ENCODE measurements at regions of chr14 and their contacts with region 1.

Region 1: GRCh38 chr14:74793506-74794168 is 30.5 kb downstream of the YLPM1 start:
- DNase-seq: no peak
- H3K4me3 ChIP-seq: no peak overlapping the region
- H3K27ac ChIP-seq: no peak overlapping the region
- H3K4me1 ChIP-seq: peaks cover 0 to 14% (median 0%) of the 10 kb centered on the region in 4 experiments; a peak in 1 of 7 replicates
- H3K27me3 ChIP-seq: no peaks in the 10 kb centered on the region
- CTCF ChIP-seq: peak in 2 of 3 experiments; percentile 40 to 51; a peak in 3 of 4 replicates
- EP300 ChIP-seq: no peak
- POLR2A ChIP-seq: no peak
- RAD21 ChIP-seq: no peak; a peak in 1 of 4 replicates

Region 2: DNA sequence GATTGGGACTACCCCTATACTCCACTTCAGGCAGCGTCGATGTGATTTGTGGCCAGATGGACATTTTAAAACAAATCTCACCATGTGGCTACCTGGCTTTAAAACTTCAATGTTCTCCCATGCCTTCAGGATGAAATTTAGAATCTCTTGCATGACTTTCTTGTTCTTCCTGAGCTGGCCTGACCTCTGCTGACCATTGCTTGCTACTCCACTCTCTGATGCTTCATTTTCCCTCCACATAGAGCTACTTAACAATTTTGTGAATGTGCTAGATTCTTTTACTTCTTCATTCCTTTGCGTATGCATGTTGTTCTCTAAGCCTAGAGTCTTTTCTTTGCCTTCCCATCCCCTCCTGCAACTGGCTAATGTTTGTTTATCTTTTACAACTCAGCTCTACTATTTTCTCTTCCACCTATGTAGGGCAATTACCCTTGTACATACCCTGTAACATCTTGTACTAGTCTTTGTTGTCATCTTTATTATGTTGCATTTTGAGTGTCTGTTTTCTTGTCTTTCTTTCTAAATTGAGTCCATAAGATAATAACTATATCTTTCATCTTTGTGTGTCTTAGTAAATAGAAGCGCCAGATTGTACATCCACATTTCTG is 10.7 kb after region 1 on chr14:
- CTCF ChIA-PET with region 1: interaction called, 10 read pairs
- POLR2A ChIA-PET with region 1: no interaction called
- DNase-seq: no peak
- H3K4me3 ChIP-seq: no peak overlapping the region
- H3K27ac ChIP-seq: no peak overlapping the region
- H3K4me1 ChIP-seq: no peaks in the 10 kb centered on the region
- H3K27me3 ChIP-seq: no peaks in the 10 kb centered on the region
- CTCF ChIP-seq: peak in 2 of 3 experiments; percentile 52 to 66; a peak in 3 of 4 replicates
- EP300 ChIP-seq: no peak
- POLR2A ChIP-seq: no peak
- RAD21 ChIP-seq: peak; percentile 67 to 73